Activated naive CD4-positive, alpha-beta T cell treated with anti-CD3 and anti-CD28 coated beads for 36 hours (primary cell): ENCODE measurements at regions of chr11 and their contacts with region 1.

Region 1: DNA sequence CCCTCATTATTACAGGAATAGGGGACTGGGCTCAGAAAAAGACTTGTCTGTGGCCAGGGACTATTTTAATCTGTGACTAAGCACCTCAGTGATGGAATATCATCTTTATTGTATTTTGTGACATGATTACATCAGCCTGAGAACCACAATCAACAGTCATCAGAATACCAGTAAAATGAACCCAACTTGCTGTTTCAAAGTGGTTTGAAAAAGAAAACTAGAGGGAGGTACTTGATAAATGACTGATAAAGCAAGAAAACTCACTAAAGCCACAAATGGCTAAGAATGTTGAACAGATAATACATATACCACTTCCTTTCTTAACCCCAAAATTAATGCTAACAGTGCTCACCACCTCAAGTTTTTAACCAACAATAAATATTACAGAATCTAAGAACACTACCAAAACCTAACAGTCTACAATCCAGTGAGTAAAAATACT is 155.7 kb downstream of the ATG16L2 start:
- DNase-seq: peak; percentile 30
- H3K4me3 Mint-ChIP-seq: no peak overlapping the region
- H3K27ac Mint-ChIP-seq: peak overlapping the region; percentile 52
- H3K4me1 Mint-ChIP-seq: peaks cover 27% of the 10 kb centered on the region
- H3K27me3 Mint-ChIP-seq: no peaks in the 10 kb centered on the region

Region 2: GRCh38 chr11:72534565-72535547 is 435.1 kb before region 1 on chr11:
- CTCF ChIA-PET with region 1: no interaction called
- intact Hi-C with region 1: no loop called
- DNase-seq: no peak
- H3K4me3 Mint-ChIP-seq: no peak overlapping the region
- H3K27ac Mint-ChIP-seq: no peak overlapping the region
- H3K4me1 Mint-ChIP-seq: no peaks in the 10 kb centered on the region
- H3K27me3 Mint-ChIP-seq: peaks cover 7% of the 10 kb centered on the region

Region 3: DNA sequence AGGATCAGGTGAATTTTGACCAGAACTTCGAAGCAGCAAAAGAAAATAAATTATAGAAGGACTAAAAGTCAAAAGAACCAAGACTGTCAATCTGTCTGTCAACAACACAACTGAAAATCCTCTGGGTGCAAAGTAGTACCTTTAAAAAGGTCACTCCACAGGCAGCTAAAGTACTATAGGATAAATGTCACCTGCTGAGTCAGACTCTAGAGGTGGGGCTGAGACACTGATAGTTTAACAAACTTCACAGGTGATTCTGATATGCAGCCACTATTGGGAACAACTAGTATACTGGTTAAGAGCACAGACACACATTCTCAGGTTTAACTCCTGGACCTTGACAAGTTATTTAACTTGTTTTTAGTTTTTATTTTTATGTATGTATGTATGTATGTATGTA is 64.9 kb after region 1 on chr11:
- CTCF ChIA-PET with region 1: no interaction called
- intact Hi-C with region 1: loop called (anchors 1 kb)
- DNase-seq: peak; percentile 28
- H3K4me3 Mint-ChIP-seq: peak overlapping the region; percentile 15
- H3K27ac Mint-ChIP-seq: peak overlapping the region; percentile 72
- H3K4me1 Mint-ChIP-seq: peaks cover 34% of the 10 kb centered on the region
- H3K27me3 Mint-ChIP-seq: no peaks in the 10 kb centered on the region